ENCODE measurements at regions of chr12 and their contacts with region 1.

Region 1: GRCh38 chr12:50105983-50106382 is 2.2 kb downstream of the GPD1 start:
- DNase-seq: no peak
- ATAC-seq: no peak
- H3K4me3 ChIP-seq: no peak overlapping the region
- H3K27ac ChIP-seq: no peak overlapping the region
- H3K4me1 ChIP-seq: peaks cover 6% of the 10 kb centered on the region; the same call in 1 of the 2 replicates
- H3K27me3 ChIP-seq: no peaks in the 10 kb centered on the region
- CTCF ChIP-seq: no peak

Region 2: GRCh38 chr12:49980501-49981349 is 125.3 kb before region 1 on chr12:
- CTCF ChIA-PET with region 1: interaction called, 12 read pairs
- POLR2A ChIA-PET with region 1: no interaction called
- intact Hi-C with region 1: no loop called
- DNase-seq: no peak
- ATAC-seq: no peak
- H3K4me3 ChIP-seq: no peak overlapping the region
- H3K27ac ChIP-seq: no peak overlapping the region
- H3K4me1 ChIP-seq: peaks cover 9% of the 10 kb centered on the region; the same call in 1 of the 2 replicates
- H3K27me3 ChIP-seq: no peaks in the 10 kb centered on the region
- CTCF ChIP-seq: no peak

Measured in PC-3 (cell line).